ENCODE measurements at regions of chr17 and their contacts with region 1.

Region 1: GRCh38 chr17:7136266-7136877 is 21.8 kb upstream of the ASGR2 start:
- DNase-seq: peak; percentile 53 to 74 (median 71)
- ATAC-seq: peak; percentile 24
- H3K4me3 ChIP-seq: no peak overlapping the region
- H3K4me3 Mint-ChIP-seq: peak overlapping the region in 4 of 10 donors; percentile 32 to 53 (median 44)
- H3K27ac ChIP-seq: no peak overlapping the region
- H3K27ac Mint-ChIP-seq: peak overlapping the region in 4 of 9 donors; percentile 8 to 48 (median 28)
- H3K4me1 ChIP-seq: peaks cover 6 to 20% of the 10 kb centered on the region in 2 donors
- H3K4me1 Mint-ChIP-seq: peaks cover 13 to 34% (median 23%) of the 10 kb centered on the region in 7 donors
- H3K27me3 ChIP-seq: no peaks in the 10 kb centered on the region
- H3K27me3 Mint-ChIP-seq: peaks cover 0 to 24% (median 6%) of the 10 kb centered on the region in 5 donors

Region 2: DNA sequence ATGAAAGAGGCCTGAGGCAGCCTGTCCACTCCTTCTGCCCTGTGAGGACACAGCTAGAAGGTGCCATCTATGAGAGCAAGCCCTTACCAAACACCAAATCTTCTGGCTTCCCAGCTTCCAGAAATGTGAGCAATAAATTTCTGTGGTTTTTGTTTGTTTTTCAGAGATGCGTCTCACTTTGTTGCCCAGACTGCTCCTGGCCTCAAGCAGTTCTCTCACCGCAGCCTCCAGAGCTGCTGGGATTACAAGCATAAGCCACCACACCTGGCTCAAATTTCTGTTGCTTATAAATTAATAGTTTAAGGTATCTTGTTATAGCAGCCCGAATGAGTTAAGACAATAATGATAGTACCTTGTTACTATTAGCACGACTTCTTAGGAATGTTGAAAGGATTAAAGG is 80.0 kb before region 1 on chr17:
- CTCF ChIA-PET with region 1: interaction called, 47 read pairs
- POLR2A ChIA-PET with region 1: interaction called, 4 read pairs
- intact Hi-C with region 1: loop called (anchors 1 kb)
- DNase-seq: no peak
- ATAC-seq: no peak
- H3K4me3 ChIP-seq: no peak overlapping the region
- H3K4me3 Mint-ChIP-seq: no peak overlapping the region
- H3K27ac ChIP-seq: no peak overlapping the region
- H3K27ac Mint-ChIP-seq: no peak overlapping the region
- H3K4me1 ChIP-seq: no peaks in the 10 kb centered on the region
- H3K4me1 Mint-ChIP-seq: peaks cover 0 to 9% (median 4%) of the 10 kb centered on the region in 7 donors
- H3K27me3 ChIP-seq: no peaks in the 10 kb centered on the region
- H3K27me3 Mint-ChIP-seq: peaks cover 0 to 5% (median 0%) of the 10 kb centered on the region in 5 donors

Region 3: DNA sequence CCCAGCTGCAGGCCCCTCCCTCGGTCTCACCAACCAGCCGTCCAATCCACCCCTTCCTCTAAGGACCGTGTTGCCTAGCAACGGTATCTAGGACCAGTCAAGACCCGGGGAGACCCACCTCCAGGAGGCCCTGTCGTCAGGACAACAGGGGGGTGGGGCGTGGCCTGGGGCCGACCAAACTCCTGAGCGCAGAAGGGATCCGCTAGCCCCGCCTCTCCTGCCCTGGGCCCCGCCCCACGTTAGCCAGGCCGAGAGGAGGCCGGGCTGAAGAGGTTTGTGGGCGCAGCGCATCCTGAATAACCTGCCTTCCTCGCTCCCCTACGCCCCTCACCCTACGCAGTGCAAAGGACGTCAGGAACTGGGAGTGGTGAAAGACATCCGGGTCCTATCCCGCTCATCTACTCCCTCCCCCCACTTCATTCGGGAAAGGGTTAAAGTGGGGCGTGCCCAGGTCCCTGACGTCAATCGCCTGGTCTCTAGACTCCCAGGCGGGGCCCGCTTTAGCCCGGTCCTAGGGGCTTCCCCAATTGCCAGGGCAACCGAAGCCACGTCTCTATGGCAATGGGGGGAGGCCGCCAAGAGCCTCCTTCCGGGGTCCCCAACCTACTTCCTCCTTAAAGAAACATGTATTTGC is 68.6 kb after region 1 on chr17:
- CTCF ChIA-PET with region 1: no interaction called
- POLR2A ChIA-PET with region 1: no interaction called
- intact Hi-C with region 1: no loop called
- DNase-seq: peak; percentile 90 to 99 (median 97)
- ATAC-seq: peak; percentile 90
- H3K4me3 ChIP-seq: peak overlapping the region; percentile 77
- H3K4me3 Mint-ChIP-seq: peak overlapping the region; percentile 67 to 94 (median 85)
- H3K27ac ChIP-seq: peak overlapping the region; percentile 91
- H3K27ac Mint-ChIP-seq: peak overlapping the region; percentile 88 to 99 (median 95)
- H3K4me1 ChIP-seq: peaks cover 15 to 17% of the 10 kb centered on the region in 2 donors
- H3K4me1 Mint-ChIP-seq: peaks cover 28 to 39% (median 32%) of the 10 kb centered on the region in 7 donors
- H3K27me3 ChIP-seq: no peaks in the 10 kb centered on the region
- H3K27me3 Mint-ChIP-seq: no peaks in the 10 kb centered on the region